Heart right ventricle (tissue), 16 donors: ENCODE measurements at regions of chr7 and their contacts with region 1.

Region 1: DNA sequence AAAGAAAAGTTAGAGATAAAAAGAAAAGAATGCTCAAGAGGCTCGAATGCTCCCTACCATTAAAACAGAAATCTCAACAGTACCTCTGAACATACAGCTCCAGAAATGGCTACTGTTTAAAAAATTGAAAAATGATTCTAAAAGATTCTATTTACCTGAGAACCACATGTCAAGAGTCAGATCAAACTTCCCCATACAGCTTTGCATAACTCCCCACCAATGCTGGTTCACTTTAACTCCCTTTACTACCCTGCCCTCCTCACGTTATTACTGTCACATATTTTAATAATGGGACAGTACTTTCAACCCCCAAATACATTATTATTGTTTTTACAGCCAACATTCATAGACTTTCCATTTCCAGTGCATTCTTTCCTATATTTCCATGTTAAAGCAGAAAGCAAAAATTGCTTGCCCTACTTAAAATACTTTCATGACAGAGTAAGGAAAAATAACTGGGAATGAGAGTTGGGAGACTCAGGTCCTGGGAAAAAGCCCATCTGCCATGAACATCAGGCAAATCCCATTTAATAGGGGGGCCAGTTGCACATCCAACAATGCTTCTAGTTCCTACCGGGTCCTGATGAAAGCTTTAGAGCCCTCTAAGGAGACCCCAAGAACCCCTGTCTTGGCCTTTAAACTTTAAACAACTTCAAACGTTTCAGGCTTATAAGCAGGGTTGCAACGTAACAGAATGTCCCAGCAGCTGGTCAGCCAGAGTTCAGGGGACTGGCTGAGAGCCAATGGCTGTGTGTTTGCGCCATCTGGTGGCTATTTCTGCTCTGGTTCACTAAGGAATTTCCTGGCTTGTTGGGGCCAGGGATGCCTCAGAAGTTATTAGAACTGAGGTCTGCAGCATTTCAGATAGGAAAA is 247.4 kb downstream of the ELMO1 start:
- DNase-seq: peak; percentile 73 to 81
- ATAC-seq: peak; percentile 78 to 93 (median 87)
- H3K4me3 ChIP-seq: no peak overlapping the region
- H3K27ac ChIP-seq: peak overlapping the region; percentile 17 to 80 (median 53)
- H3K4me1 ChIP-seq: peaks cover 5 to 50% (median 33%) of the 10 kb centered on the region in 9 donors
- H3K27me3 ChIP-seq: no peaks in the 10 kb centered on the region
- CTCF ChIP-seq: peak; percentile 60 to 94 (median 90)

Region 2: GRCh38 chr7:36487756-36488336 is 713.4 kb before region 1 on chr7:
- intact Hi-C with region 1: loop called in 9 of 10 experiments (anchors 5 to 10 kb)
- DNase-seq: no peak
- ATAC-seq: peak in 1 of 8 donors; percentile 59
- H3K4me3 ChIP-seq: no peak overlapping the region
- H3K27ac ChIP-seq: no peak overlapping the region
- H3K4me1 ChIP-seq: no peaks in the 10 kb centered on the region
- H3K27me3 ChIP-seq: peaks cover 0 to 5% (median 0%) of the 10 kb centered on the region in 7 donors
- CTCF ChIP-seq: peak in 8 of 9 donors; percentile 30 to 75 (median 68)

Region 3: DNA sequence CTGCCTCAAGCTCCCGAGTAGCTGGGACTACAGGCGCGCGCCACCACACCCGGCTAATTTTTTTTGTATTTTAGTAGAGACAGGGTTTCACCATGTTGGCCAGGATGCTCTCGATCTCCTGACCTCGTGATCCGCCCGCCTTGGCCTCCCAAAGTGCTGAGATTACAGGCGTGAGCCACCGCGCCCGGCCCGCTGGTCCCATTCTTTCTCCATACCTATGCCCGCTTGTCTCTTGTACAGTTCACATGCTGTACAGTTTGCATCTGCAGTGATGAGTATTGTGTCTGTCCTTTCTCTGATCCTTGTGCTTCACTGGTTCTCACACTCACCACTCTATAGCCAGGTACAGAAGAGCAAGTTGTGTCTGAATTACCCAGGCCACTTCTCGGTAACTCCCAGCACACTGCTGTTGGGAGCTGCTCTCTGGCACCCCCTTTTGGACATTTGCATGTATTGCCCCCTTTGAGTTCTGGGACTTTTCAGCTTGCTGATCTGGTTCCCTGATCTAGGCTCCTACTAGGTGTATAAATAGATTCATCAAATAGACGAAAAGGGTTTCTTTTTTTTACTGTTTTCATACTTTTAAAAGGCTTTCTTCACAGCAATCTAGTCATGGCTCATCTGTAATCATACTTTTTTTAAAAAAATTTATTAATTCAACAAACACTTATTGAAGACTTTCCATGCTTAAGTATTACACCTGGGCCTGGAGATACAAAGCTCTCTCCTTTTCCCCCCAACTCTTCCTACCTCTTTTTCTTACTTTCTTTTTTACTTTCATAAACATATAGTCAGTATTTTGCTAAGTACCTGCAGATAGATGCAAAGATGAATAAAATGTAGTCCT is 530.4 kb before region 1 on chr7:
- intact Hi-C with region 1: loop called in 1 of 10 experiments (anchors 10 kb)
- DNase-seq: peak in 1 of 2 donors; percentile 27
- ATAC-seq: peak in 4 of 8 donors; percentile 56 to 71 (median 61)
- H3K4me3 ChIP-seq: no peak overlapping the region
- H3K27ac ChIP-seq: no peak overlapping the region
- H3K4me1 ChIP-seq: no peaks in the 10 kb centered on the region
- H3K27me3 ChIP-seq: peaks cover 0 to 3% (median 0%) of the 10 kb centered on the region in 7 donors
- CTCF ChIP-seq: peak; percentile 49 to 87 (median 77)

Region 4: GRCh38 chr7:36967387-36967786 is 233.9 kb before region 1 on chr7:
- intact Hi-C with region 1: loop called in 6 of 10 experiments (anchors 1 to 5 kb)
- DNase-seq: peak; percentile 20 to 74
- ATAC-seq: peak; percentile 85 to 98 (median 94)
- H3K4me3 ChIP-seq: no peak overlapping the region
- H3K27ac ChIP-seq: peak overlapping the region in 1 of 10 donors; percentile 49
- H3K4me1 ChIP-seq: peaks cover 0 to 45% (median 21%) of the 10 kb centered on the region in 9 donors
- H3K27me3 ChIP-seq: no peaks in the 10 kb centered on the region
- CTCF ChIP-seq: peak; percentile 59 to 89 (median 80)

Region 5: GRCh38 chr7:36986429-36987362 is 214.5 kb before region 1 on chr7:
- intact Hi-C with region 1: loop called in 3 of 10 experiments (anchors 5 kb)
- DNase-seq: peak; percentile 48 to 60
- ATAC-seq: peak in 6 of 8 donors; percentile 61 to 75 (median 69)
- H3K4me3 ChIP-seq: no peak overlapping the region
- H3K27ac ChIP-seq: no peak overlapping the region
- H3K4me1 ChIP-seq: peaks cover 0 to 29% (median 11%) of the 10 kb centered on the region in 9 donors
- H3K27me3 ChIP-seq: peaks cover 0 to 4% (median 0%) of the 10 kb centered on the region in 7 donors
- CTCF ChIP-seq: peak; percentile 68 to 88 (median 79)

Region 6: DNA sequence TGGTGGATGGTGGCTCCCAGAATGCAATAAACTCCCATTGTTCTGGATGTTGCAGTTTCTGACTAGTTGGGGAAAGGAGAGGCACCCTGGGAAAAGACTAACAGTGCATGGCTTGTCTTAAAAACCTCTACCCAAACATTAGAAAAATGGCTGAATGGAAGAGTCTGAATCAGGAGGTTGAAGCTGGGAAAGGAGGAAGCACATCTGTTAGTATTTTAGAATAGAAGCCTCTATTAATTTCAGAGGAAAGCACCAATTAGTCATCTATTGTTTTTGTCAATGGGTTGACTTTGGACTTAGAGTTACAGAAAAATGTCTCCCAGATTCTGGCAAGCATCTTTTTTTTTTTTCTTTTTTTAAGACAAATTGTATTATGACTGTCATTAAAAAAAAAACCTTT is 303.6 kb after region 1 on chr7:
- intact Hi-C with region 1: loop called in 1 of 10 experiments (anchors 10 kb)
- DNase-seq: no peak
- ATAC-seq: peak in 4 of 8 donors; percentile 35 to 64 (median 60)
- H3K4me3 ChIP-seq: no peak overlapping the region
- H3K27ac ChIP-seq: peak overlapping the region in 1 of 10 donors; percentile 32
- H3K4me1 ChIP-seq: peaks cover 0 to 21% (median 0%) of the 10 kb centered on the region in 9 donors
- H3K27me3 ChIP-seq: no peaks in the 10 kb centered on the region
- CTCF ChIP-seq: no peak

Region 7: GRCh38 chr7:37833107-37833817 is 632.0 kb after region 1 on chr7:
- intact Hi-C with region 1: loop called in 6 of 10 experiments (anchors 5 to 10 kb)
- DNase-seq: peak; percentile 17 to 19
- ATAC-seq: peak in 3 of 8 donors; percentile 33 to 61 (median 40)
- H3K4me3 ChIP-seq: peak overlapping the region in 7 of 10 donors; percentile 7 to 48 (median 40)
- H3K27ac ChIP-seq: no peak overlapping the region
- H3K4me1 ChIP-seq: peaks cover 0 to 18% (median 5%) of the 10 kb centered on the region in 9 donors
- H3K27me3 ChIP-seq: peaks cover 0 to 7% (median 0%) of the 10 kb centered on the region in 7 donors
- CTCF ChIP-seq: peak; percentile 66 to 86 (median 76)